Activated naive CD4-positive, alpha-beta T cell treated with anti-CD3 and anti-CD28 coated beads for 36 hours (primary cell): ENCODE measurements at regions of chrX and their contacts with region 1.

Region 1: DNA sequence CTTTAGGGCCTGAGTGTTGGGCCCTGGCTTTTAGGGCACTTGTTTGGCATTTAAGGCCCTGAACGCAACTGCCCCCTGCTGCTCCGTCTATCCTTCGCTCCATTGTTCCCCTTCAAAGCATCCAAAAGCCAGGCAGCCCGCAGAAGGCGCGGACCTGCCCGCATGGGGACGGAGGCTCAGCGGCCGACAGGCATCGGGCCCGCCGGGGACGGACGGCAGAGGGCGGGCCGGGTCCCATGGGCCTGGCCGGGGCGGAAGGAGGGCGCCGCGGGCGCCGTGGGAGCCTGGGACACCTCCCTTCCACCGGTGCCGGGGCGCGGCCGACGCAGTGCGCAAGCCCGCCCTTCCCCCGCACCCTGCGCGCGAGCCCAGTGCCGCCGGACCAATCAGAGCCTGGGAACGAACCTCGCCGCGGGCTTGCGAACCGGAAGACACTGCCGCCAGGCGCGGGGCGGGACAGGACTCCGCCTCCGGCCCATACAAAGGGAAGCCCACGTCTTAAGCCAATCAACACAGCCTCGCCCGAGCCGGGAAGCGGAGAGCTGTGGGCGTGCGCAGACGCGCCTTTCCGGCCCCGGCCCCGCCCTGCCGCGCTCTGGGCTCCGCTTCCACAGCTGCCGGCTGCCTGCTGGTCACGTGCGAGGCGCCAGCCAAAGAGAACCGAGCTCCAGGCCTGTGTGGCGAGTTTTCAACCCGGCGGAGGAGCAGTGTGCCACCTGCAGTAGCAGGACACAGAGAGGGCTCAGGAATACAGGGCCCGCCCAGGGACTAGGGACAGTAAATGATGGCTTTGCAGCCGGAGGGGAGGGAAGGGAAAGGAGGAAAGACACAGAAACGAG is 2.1 kb upstream of the ARHGAP4 start:
- DNase-seq: peak; percentile 93
- H3K4me3 Mint-ChIP-seq: peak overlapping the region; percentile 88
- H3K27ac Mint-ChIP-seq: peak overlapping the region; percentile 98
- H3K4me1 Mint-ChIP-seq: peaks cover 28% of the 10 kb centered on the region
- H3K27me3 Mint-ChIP-seq: no peaks in the 10 kb centered on the region

Region 2: DNA sequence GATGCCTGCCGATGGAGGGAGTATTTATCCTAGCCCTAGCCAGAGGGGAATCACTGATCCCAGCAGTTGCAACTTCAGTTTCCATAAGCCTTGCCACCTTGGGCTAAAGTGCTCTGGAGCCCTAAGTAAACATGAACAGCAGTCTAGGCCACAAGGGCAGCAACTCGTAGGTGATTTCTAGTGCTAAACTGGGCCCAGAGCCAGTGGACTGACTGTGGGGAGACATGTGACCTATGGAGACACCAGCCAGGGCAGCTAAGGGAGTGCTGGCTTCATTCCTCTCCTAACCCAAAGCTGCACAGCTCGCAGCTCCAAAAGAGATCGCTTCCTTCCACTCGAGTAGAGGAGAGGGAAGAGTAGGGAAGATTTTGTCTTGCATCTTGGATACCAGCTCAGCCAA is 1669.0 kb before region 1 on chrX:
- CTCF ChIA-PET with region 1: no interaction called
- intact Hi-C with region 1: no loop called
- DNase-seq: no peak
- H3K4me3 Mint-ChIP-seq: no peak overlapping the region
- H3K27ac Mint-ChIP-seq: no peak overlapping the region
- H3K4me1 Mint-ChIP-seq: no peaks in the 10 kb centered on the region
- H3K27me3 Mint-ChIP-seq: peaks cover 2% of the 10 kb centered on the region

Region 3: GRCh38 chrX:153724252-153725040 is 203.7 kb before region 1 on chrX and contains the starts of genes ABCD1 and BCAP31:
- CTCF ChIA-PET with region 1: no interaction called
- intact Hi-C with region 1: loop called (anchors 1 kb)
- DNase-seq: peak; percentile 88
- H3K4me3 Mint-ChIP-seq: peak within 1 kb of the TSS; percentile 85
- H3K27ac Mint-ChIP-seq: peak within 1 kb of the TSS; percentile 81
- H3K4me1 Mint-ChIP-seq: peaks cover 25% of the 10 kb centered on the region
- H3K27me3 Mint-ChIP-seq: no peaks in the 10 kb centered on the region
- total RNA-seq, gene ABCD1: 2.5 to 3.4 TPM
- total RNA-seq, gene BCAP31: 69.5 to 71.2 TPM

Region 4: DNA sequence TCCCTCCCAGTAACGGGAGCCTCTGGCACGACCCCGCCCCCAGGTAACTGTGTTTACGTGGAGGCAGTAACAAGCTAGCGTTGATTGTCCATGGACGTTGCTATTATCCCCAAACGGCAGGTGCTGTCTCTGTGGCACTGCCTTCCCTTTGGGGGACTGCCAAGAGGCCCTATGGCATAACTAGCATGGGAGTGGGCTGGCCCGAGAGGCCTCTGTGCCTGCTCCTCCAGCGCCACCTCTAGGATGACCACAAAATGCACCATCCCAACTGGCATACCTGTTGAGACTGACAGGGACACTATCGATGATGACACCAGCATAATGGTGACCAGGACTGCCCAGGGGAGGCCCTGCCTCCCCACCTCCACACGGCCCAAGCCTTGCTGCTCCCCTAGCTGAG is 145.8 kb before region 1 on chrX:
- CTCF ChIA-PET with region 1: no interaction called
- intact Hi-C with region 1: no loop called
- DNase-seq: no peak
- H3K4me3 Mint-ChIP-seq: no peak overlapping the region
- H3K27ac Mint-ChIP-seq: no peak overlapping the region
- H3K4me1 Mint-ChIP-seq: peaks cover 8% of the 10 kb centered on the region
- H3K27me3 Mint-ChIP-seq: peaks cover 5% of the 10 kb centered on the region

Region 5: DNA sequence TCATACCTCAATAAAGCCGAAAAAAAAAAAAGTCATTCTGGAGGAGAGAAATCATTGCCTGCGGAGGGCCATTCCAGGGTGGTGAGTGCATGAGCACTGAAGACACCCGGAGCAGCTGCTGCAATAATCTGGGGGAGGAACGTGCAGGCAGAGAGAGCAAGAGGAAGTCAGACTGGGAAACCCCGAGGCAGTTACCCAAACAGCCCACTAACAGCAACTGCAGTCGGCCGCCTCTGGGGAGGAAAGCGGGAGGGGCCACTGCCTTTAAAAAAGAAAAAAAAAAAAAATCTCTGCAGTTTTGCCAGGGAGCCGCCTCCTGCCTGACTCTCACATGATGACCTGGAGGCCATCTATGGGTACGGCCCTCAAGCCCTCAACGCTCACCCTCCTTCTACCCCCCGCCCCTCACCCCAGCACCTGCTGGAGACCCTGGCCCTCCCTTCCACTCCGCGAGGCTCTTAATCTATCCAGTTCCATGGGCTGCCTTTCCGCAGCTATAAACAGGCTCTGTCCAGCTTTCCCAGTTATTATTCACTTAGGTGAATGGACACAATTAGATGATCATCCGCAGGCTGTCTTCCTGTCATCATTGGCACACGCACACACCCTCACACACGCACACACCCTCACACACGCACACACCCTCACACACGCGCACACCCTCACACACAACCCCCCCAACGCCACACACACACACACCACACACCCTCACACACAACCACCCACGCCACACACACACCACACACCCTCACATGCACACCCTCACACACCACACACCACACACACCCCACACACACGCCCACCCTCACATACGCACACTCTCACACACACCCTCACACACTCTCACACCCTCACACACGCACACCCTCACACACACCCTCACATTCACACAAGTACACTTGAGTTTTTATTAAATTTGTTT is 27.0 kb before region 1 on chrX:
- CTCF ChIA-PET with region 1: no interaction called
- intact Hi-C with region 1: loop called (anchors 2 kb)
- DNase-seq: peak; percentile 82
- H3K4me3 Mint-ChIP-seq: peak overlapping the region; percentile 43
- H3K27ac Mint-ChIP-seq: peak overlapping the region; percentile 53
- H3K4me1 Mint-ChIP-seq: peaks cover 33% of the 10 kb centered on the region
- H3K27me3 Mint-ChIP-seq: no peaks in the 10 kb centered on the region

Region 6: DNA sequence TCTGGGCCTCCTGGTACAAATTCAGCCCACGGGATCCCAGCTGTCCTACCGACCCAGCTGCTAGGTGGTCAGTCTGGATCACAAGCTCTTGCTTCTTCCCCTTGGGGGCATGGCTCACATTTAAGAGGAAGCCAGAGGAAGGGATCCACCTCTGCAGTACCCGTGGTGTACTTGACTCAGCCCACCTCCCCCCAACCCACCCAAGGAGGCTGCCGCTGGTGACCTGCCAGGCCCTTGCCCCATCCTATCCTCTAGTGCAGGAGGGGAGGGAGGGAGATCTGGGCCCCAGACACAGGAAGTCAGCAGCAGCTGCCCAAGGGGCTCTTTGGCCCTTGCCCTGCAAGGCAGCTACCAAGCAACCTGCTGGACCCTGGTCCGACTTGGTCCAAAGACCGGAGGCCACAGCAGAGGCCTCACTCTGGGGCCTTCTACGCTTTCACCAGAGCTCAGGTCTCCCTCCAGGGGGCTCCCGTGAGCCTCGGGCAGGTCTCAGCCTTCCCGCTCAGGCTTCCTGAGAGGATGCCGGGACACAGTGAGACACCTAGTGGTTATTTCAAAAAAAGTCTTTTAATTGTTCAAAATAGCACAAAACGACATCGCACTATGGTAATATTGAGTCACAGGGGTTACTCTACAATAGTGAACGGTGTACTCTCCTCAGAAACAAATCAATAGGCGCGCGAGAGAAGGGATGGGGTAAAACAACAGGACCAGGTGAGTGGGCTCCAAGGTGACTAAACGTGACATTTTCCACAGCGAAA is 19.0 kb after region 1 on chrX:
- CTCF ChIA-PET with region 1: interaction called, 82 read pairs
- intact Hi-C with region 1: loop called (anchors 1 kb)
- DNase-seq: peak; percentile 87
- H3K4me3 Mint-ChIP-seq: no peak overlapping the region
- H3K27ac Mint-ChIP-seq: peak overlapping the region; percentile 76
- H3K4me1 Mint-ChIP-seq: peaks cover 28% of the 10 kb centered on the region
- H3K27me3 Mint-ChIP-seq: no peaks in the 10 kb centered on the region